CD4-positive, alpha-beta T cell (primary cell): ENCODE measurements at regions of chrX and their contacts with region 1.

Region 1: DNA sequence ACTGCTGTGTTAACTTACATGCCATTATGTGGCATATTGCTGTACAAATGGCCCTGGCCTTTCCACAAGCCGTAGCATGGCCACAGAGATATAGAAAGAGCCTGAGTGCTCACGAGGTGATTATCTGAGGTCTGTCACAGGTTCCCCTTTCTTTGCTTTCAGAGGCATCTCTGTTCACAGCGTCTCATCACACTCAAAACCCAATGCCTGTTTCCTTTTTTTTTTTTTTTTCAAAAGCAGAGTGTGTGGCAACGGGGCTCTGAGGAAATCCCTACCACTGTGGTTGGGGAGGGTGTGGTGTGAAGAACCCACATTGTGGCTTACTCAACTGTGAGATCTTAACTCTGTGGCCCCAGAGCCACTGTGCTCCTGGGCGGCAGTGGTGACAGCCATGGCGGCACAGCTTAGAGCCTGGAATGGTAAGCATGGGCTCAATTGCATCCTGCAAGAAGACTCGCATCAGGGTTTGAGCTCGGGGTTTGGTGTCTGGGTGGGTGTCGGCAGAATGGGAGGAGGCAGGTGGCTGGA is 30.8 kb downstream of the RTL5 start:
- DNase-seq: peak; percentile 42 to 93 (median 56)
- ATAC-seq: peak; percentile 61
- H3K4me3 ChIP-seq: peak overlapping the region; percentile 61
- H3K4me3 Mint-ChIP-seq: peak overlapping the region; percentile 82
- H3K27ac ChIP-seq: peak overlapping the region in 1 of 2 donors; percentile 82
- H3K27ac Mint-ChIP-seq: peak overlapping the region; percentile 89
- H3K4me1 ChIP-seq: peaks cover 67% of the 10 kb centered on the region
- H3K4me1 Mint-ChIP-seq: peaks cover 46% of the 10 kb centered on the region
- H3K27me3 ChIP-seq: peaks cover 0 to 2% of the 10 kb centered on the region in 2 experiments
- H3K27me3 Mint-ChIP-seq: peaks cover 19% of the 10 kb centered on the region
- CTCF ChIP-seq: no peak

Region 2: DNA sequence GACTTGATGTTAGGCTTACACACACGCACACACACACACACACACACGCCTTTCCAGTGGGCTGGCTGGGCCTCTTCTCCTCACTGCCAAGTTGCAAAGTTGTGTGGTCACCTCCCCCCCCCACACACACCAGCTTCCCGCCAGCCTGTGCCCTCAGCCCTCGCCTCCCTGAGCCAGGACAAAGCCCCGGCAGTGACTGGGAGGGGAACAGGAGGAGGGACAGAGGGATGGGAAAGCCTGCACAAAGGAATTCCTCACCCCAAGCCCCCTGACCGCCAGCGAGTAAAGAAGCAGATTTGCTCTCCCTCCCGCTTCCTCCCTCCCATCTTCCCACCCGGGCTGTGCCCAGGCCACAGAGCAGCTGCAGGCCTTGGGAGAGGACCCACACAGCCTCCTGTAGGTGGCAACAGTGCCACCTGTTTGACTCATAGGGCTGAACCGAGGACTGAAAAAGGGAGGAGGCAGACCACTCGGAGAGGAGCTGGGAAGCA is 1678.0 kb before region 1 on chrX and contains the start of gene GDPD2:
- CTCF ChIA-PET with region 1: no interaction called
- POLR2A ChIA-PET with region 1: no interaction called
- intact Hi-C with region 1: no loop called
- DNase-seq: no peak
- ATAC-seq: no peak
- H3K4me3 ChIP-seq: no peak within 1 kb of the TSS
- H3K4me3 Mint-ChIP-seq: no peak within 1 kb of the TSS
- H3K27ac ChIP-seq: no peak within 1 kb of the TSS
- H3K27ac Mint-ChIP-seq: no peak within 1 kb of the TSS
- H3K4me1 ChIP-seq: no peaks in the 10 kb centered on the region
- H3K4me1 Mint-ChIP-seq: no peaks in the 10 kb centered on the region
- H3K27me3 ChIP-seq: no peaks in the 10 kb centered on the region
- H3K27me3 Mint-ChIP-seq: no peaks in the 10 kb centered on the region
- CTCF ChIP-seq: no peak
- total RNA-seq, gene GDPD2: not detected

Region 3: GRCh38 chrX:72045552-72046277 is 55.2 kb before region 1 on chrX:
- CTCF ChIA-PET with region 1: no interaction called
- POLR2A ChIA-PET with region 1: no interaction called
- intact Hi-C with region 1: loop called in 1 of 2 experiments (anchors 5 kb)
- DNase-seq: no peak
- ATAC-seq: no peak
- H3K4me3 ChIP-seq: no peak overlapping the region
- H3K4me3 Mint-ChIP-seq: peak overlapping the region; percentile 35
- H3K27ac ChIP-seq: no peak overlapping the region
- H3K27ac Mint-ChIP-seq: peak overlapping the region; percentile 44
- H3K4me1 ChIP-seq: peaks cover 54% of the 10 kb centered on the region
- H3K4me1 Mint-ChIP-seq: peaks cover 36% of the 10 kb centered on the region
- H3K27me3 ChIP-seq: no peaks in the 10 kb centered on the region
- H3K27me3 Mint-ChIP-seq: no peaks in the 10 kb centered on the region
- CTCF ChIP-seq: no peak

Region 4: GRCh38 chrX:72121383-72121782 is 20.5 kb after region 1 on chrX:
- CTCF ChIA-PET with region 1: interaction called, 5 read pairs
- POLR2A ChIA-PET with region 1: interaction called, 4 read pairs
- intact Hi-C with region 1: loop called (anchors 1 to 2 kb)
- DNase-seq: peak in 11 of 14 experiments; percentile 23 to 74 (median 42)
- ATAC-seq: peak; percentile 82
- H3K4me3 ChIP-seq: peak overlapping the region; percentile 20
- H3K4me3 Mint-ChIP-seq: peak overlapping the region; percentile 20
- H3K27ac ChIP-seq: peak overlapping the region; percentile 46 to 68
- H3K27ac Mint-ChIP-seq: peak overlapping the region; percentile 84
- H3K4me1 ChIP-seq: peaks cover 62% of the 10 kb centered on the region
- H3K4me1 Mint-ChIP-seq: peaks cover 40% of the 10 kb centered on the region
- H3K27me3 ChIP-seq: no peaks in the 10 kb centered on the region
- H3K27me3 Mint-ChIP-seq: peaks cover 1% of the 10 kb centered on the region
- CTCF ChIP-seq: no peak